Breast epithelium (tissue), 4 donors: ENCODE measurements at regions of chr1 and their contacts with region 1.

Region 1: GRCh38 chr1:164475834-164476233 is 83.2 kb upstream of the PBX1 start:
- DNase-seq: no peak
- H3K4me3 ChIP-seq: no peak overlapping the region
- H3K27ac ChIP-seq: no peak overlapping the region
- H3K4me1 ChIP-seq: no peaks in the 10 kb centered on the region
- H3K27me3 ChIP-seq: no peaks in the 10 kb centered on the region
- CTCF ChIP-seq: no peak
- POLR2A ChIP-seq: no peak

Region 2: DNA sequence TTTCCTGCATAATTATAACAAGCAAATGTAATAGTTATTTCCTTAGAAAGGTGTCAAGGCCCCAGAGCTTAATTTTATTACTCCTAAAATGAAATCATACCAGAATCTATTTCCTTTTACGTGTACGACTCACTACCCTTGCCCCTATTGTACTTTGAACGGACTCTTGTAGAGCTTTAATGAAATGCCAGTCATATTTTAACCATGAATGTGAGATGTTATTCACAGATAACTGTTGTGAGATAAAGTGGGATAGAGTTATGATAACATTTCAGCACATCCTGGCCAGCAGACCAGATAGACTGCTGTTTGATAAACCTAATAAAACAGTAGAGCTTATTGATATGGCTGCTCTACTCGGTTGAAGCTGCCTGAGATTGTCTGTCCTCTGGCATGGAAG is 417.6 kb before region 1 on chr1:
- intact Hi-C with region 1: loop called (anchors 5 kb)
- DNase-seq: no peak
- H3K4me3 ChIP-seq: no peak overlapping the region
- H3K27ac ChIP-seq: no peak overlapping the region
- H3K4me1 ChIP-seq: no peaks in the 10 kb centered on the region
- H3K27me3 ChIP-seq: no peaks in the 10 kb centered on the region
- CTCF ChIP-seq: no peak
- POLR2A ChIP-seq: no peak